Endothelial cell of umbilical vein (primary cell): ENCODE measurements at regions of chr17 and their contacts with region 1.

Region 1: DNA sequence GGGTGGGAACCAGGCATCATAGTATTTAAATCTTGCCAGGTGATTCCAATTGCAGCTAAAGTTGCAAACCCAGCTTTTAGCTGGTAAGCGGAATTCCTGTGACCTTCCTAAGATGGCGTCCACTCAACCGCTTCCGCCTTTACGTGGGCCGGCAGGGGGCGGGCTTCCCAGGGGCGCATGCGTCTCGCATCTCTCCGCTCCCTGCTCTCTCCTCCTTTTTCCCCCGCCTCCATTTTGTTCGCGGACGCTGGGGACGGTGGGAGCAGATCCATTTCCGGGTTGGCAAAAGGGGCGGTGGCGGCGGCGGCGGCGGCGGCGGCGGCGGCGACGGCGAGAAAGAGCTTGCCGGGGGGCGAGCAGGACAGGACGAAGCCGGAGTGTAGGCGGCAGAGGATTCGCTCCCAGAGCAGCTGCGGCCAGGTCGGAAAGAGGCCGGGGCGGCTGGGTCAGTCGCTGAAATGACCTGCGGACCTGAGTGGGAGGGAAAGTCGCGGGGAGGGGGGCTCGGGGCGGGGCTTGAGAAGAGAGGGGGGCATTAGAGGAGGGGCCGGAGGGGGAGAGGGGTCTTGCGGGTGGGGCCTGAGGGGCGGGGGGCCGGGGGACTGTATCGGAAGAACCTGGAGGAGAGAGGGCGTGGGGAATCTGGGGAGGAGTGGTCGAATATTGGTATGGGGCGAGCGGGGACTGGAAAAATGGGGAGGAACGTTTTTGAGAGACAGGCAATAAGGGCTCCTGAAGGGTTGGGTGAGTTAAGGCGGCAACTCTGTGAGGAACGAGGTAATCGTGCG is at the start of gene WIPF2:
- DNase-seq: peak; percentile 97
- H3K4me3 ChIP-seq: peak within 1 kb of the TSS; percentile 70 to 73 (median 72)
- H3K27ac ChIP-seq: peak within 1 kb of the TSS; percentile 75
- H3K4me1 ChIP-seq: peaks cover 2% of the 10 kb centered on the region
- H3K27me3 ChIP-seq: no peaks in the 10 kb centered on the region
- CTCF ChIP-seq: peak; percentile 53 to 63
- POLR2A ChIP-seq: no peak
- total RNA-seq, gene WIPF2: 29.0 and 30.4 TPM in 2 replicates

Region 2: GRCh38 chr17:40015005-40015997 is 204.0 kb before region 1 on chr17 and contains the start of gene CSF3:
- CTCF ChIA-PET with region 1: no interaction called
- POLR2A ChIA-PET with region 1: no interaction called
- dilution Hi-C with region 1: no loop called
- intact Hi-C with region 1: loop called (anchors 1 kb)
- DNase-seq: peak; percentile 31
- H3K4me3 ChIP-seq: peak within 1 kb of the TSS in 1 of 3 experiments; percentile 5
- H3K27ac ChIP-seq: peak within 1 kb of the TSS; percentile 88
- H3K4me1 ChIP-seq: peaks cover 56% of the 10 kb centered on the region
- H3K27me3 ChIP-seq: no peaks in the 10 kb centered on the region
- CTCF ChIP-seq: no peak
- POLR2A ChIP-seq: no peak
- total RNA-seq, gene CSF3: 2.4 and 2.9 TPM in 2 replicates

Region 3: GRCh38 chr17:40058186-40058784 is 161.0 kb before region 1 on chr17:
- CTCF ChIA-PET with region 1: no interaction called
- POLR2A ChIA-PET with region 1: no interaction called
- dilution Hi-C with region 1: no loop called
- intact Hi-C with region 1: no loop called
- DNase-seq: peak; percentile 56
- H3K4me3 ChIP-seq: no peak overlapping the region
- H3K27ac ChIP-seq: no peak overlapping the region
- H3K4me1 ChIP-seq: peaks cover 6% of the 10 kb centered on the region
- H3K27me3 ChIP-seq: peaks cover 0 to 3% of the 10 kb centered on the region in 2 experiments
- CTCF ChIP-seq: no peak
- POLR2A ChIP-seq: no peak

Region 4: GRCh38 chr17:40191237-40192208 is 27.7 kb before region 1 on chr17:
- CTCF ChIA-PET with region 1: interaction called, 23 read pairs
- POLR2A ChIA-PET with region 1: no interaction called
- dilution Hi-C with region 1: no loop called
- intact Hi-C with region 1: no loop called
- DNase-seq: peak; percentile 88
- H3K4me3 ChIP-seq: peak overlapping the region; percentile 20 to 55 (median 40)
- H3K27ac ChIP-seq: no peak overlapping the region
- H3K4me1 ChIP-seq: peaks cover 4% of the 10 kb centered on the region
- H3K27me3 ChIP-seq: no peaks in the 10 kb centered on the region
- CTCF ChIP-seq: peak; percentile 73 to 90
- POLR2A ChIP-seq: no peak

Region 5: DNA sequence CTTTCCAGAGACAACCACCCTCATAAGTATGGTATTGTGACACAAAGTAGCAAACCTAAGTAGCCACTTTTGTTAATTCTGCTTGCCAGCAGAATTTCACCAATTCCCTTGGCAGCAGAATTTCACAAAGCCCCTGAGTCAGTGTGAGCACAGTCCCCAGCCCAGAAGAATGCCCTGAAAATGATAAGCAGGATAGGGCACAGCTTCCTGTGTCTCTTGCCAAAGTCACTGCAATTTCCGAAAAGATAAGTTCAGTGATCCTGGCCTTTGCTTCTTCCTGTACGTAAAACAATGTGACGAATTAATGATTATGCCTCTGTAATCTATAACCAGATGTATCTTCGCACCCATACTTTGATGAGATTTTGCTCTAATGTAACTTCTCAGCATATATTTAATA is 16.1 kb before region 1 on chr17:
- CTCF ChIA-PET with region 1: interaction called, 13 read pairs
- POLR2A ChIA-PET with region 1: no interaction called
- dilution Hi-C with region 1: no loop called
- intact Hi-C with region 1: loop called (anchors 2 kb)
- DNase-seq: peak; percentile 41
- H3K4me3 ChIP-seq: no peak overlapping the region
- H3K27ac ChIP-seq: no peak overlapping the region
- H3K4me1 ChIP-seq: peaks cover 10% of the 10 kb centered on the region
- H3K27me3 ChIP-seq: peaks cover 0 to 2% of the 10 kb centered on the region in 2 experiments
- CTCF ChIP-seq: no peak
- POLR2A ChIP-seq: no peak

Region 6: DNA sequence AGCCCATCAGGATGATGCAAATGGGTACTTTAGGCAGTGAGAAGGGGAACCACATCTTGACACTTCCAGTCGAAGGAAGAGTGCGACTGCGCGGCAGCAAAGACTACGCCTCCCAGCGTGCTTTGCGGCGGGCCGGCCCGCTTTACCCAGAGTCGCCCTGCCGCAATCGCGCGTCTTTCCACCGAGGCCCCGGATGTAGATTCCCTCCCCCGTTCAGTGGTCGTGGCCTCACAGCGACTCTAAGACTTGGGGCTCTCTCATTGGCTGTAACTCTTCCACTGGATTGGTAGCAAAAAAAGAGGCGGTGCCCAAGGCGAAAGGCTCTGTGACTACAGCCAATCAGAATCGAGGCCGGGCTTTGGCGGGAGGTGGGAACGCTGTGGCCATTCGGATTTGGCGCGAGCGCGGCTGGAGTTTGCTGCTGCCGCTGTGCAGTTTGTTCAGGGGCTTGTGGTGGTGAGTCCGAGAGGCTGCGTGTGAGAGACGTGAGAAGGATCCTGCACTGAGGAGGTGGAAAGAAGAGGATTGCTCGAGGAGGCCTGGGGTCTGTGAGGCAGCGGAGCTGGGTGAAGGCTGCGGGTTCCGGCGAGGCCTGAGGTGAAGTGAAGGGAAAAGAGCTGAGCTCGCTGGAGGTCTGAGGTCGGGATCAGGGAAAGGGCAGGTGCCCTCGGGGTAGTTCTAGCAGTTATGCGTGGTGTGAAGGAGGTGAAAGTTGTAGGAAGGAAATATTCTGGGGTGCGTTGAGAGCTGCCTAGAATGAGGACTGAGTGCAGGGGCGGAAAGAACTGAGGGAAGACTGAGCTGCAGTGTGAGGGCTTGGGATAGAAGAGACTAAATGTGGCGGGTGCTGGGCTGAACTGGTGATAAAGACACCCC is 68.5 kb after region 1 on chr17 and contains the start of gene CDC6:
- CTCF ChIA-PET with region 1: interaction called, 13 read pairs
- POLR2A ChIA-PET with region 1: interaction called, 3 read pairs
- dilution Hi-C with region 1: no loop called
- intact Hi-C with region 1: loop called (anchors 1 kb)
- DNase-seq: peak; percentile 99
- H3K4me3 ChIP-seq: peak within 1 kb of the TSS; percentile 43 to 72 (median 65)
- H3K27ac ChIP-seq: peak within 1 kb of the TSS; percentile 50
- H3K4me1 ChIP-seq: peaks cover 35% of the 10 kb centered on the region
- H3K27me3 ChIP-seq: no peaks in the 10 kb centered on the region
- CTCF ChIP-seq: no peak
- POLR2A ChIP-seq: peak; percentile 68
- total RNA-seq, gene CDC6: 49.9 and 55.2 TPM in 2 replicates

Region 7: GRCh38 chr17:40340880-40341807 is 121.9 kb after region 1 on chr17:
- CTCF ChIA-PET with region 1: no interaction called
- POLR2A ChIA-PET with region 1: no interaction called
- dilution Hi-C with region 1: no loop called
- intact Hi-C with region 1: loop called (anchors 5 kb)
- DNase-seq: peak; percentile 73
- H3K4me3 ChIP-seq: peak overlapping the region; percentile 65 to 76 (median 69)
- H3K27ac ChIP-seq: peak overlapping the region; percentile 88
- H3K4me1 ChIP-seq: peaks cover 36% of the 10 kb centered on the region
- H3K27me3 ChIP-seq: no peaks in the 10 kb centered on the region
- CTCF ChIP-seq: no peak
- POLR2A ChIP-seq: peak; percentile 53

Region 8: DNA sequence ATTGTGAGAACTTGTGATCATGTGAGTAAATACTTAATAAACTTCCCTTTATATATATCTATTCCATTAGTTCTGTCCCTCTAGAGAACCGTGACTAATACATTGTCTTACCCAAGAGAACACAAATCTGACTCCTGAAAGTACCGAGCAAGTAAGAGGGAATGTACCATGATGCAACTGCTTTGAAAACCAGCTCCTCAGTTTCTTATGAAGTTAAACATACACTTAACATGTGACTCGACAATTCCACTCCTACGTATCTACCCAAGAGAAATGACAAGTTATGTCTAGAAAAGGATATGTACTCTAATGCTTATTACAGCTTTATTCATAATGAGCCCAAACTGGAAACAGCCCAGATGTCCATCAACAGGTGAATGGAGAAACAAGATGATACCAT is 154.1 kb after region 1 on chr17:
- CTCF ChIA-PET with region 1: no interaction called
- POLR2A ChIA-PET with region 1: no interaction called
- dilution Hi-C with region 1: no loop called
- intact Hi-C with region 1: no loop called
- DNase-seq: no peak
- H3K4me3 ChIP-seq: no peak overlapping the region
- H3K27ac ChIP-seq: no peak overlapping the region
- H3K4me1 ChIP-seq: no peaks in the 10 kb centered on the region
- H3K27me3 ChIP-seq: no peaks in the 10 kb centered on the region
- CTCF ChIP-seq: no peak
- POLR2A ChIP-seq: no peak